PC-3 (cell line): ENCODE measurements at regions of chr7 and their contacts with region 1.

Region 1: GRCh38 chr7:98362517-98362916 is 38.4 kb downstream of the BAIAP2L1 start:
- DNase-seq: no peak
- ATAC-seq: no peak
- H3K4me3 ChIP-seq: no peak overlapping the region
- H3K27ac ChIP-seq: no peak overlapping the region
- H3K4me1 ChIP-seq: peaks cover 7% of the 10 kb centered on the region
- H3K27me3 ChIP-seq: no peaks in the 10 kb centered on the region
- CTCF ChIP-seq: no peak

Region 2: GRCh38 chr7:98387544-98388224 is 25.2 kb after region 1 on chr7:
- CTCF ChIA-PET with region 1: no interaction called
- POLR2A ChIA-PET with region 1: no interaction called
- intact Hi-C with region 1: no loop called
- DNase-seq: no peak
- ATAC-seq: no peak
- H3K4me3 ChIP-seq: no peak overlapping the region
- H3K27ac ChIP-seq: no peak overlapping the region
- H3K4me1 ChIP-seq: no peaks in the 10 kb centered on the region
- H3K27me3 ChIP-seq: no peaks in the 10 kb centered on the region
- CTCF ChIP-seq: no peak

Region 3: GRCh38 chr7:99446096-99446495 is 1083.6 kb after region 1 on chr7:
- CTCF ChIA-PET with region 1: no interaction called
- POLR2A ChIA-PET with region 1: interaction called, 14 read pairs
- intact Hi-C with region 1: no loop called
- DNase-seq: no peak
- ATAC-seq: no peak
- H3K4me3 ChIP-seq: no peak overlapping the region
- H3K27ac ChIP-seq: no peak overlapping the region
- H3K4me1 ChIP-seq: no peaks in the 10 kb centered on the region
- H3K27me3 ChIP-seq: no peaks in the 10 kb centered on the region
- CTCF ChIP-seq: no peak